ENCODE measurements at regions of chr2 and their contacts with region 1.

Region 1: GRCh38 chr2:109128048-109128465 is 948 bp upstream of the SH3RF3 start:
- DNase-seq: peak; percentile 49 to 79
- H3K4me3 ChIP-seq: peak overlapping the region; percentile 70
- H3K27ac ChIP-seq: no peak overlapping the region
- H3K4me1 ChIP-seq: peaks cover 57% of the 10 kb centered on the region
- H3K27me3 ChIP-seq: no peaks in the 10 kb centered on the region
- CTCF ChIP-seq: peak; percentile 90

Region 2: DNA sequence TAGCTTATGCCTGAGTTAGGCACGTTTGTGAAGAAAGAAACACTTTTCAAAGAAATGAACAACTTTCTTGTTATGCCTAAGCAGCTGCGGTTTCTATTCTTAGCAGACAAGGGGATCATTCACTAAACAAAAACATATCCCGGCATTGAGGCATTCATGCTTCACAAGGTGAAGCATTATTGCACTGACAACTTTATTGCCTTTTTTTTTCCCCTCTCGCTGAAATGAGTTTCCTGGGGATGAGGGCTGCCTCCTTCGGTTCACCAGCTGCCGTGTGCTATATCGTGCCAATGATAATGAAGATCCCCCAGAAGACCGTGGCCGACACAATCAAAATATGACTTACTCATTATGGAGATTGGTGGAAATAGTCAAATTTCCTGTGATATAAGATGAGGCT is 1953.9 kb before region 1 on chr2:
- CTCF ChIA-PET with region 1: no interaction called
- POLR2A ChIA-PET with region 1: no interaction called
- intact Hi-C with region 1: no loop called
- DNase-seq: no peak
- H3K4me3 ChIP-seq: no peak overlapping the region
- H3K27ac ChIP-seq: no peak overlapping the region
- H3K4me1 ChIP-seq: no peaks in the 10 kb centered on the region
- H3K27me3 ChIP-seq: peaks cover 19% of the 10 kb centered on the region
- CTCF ChIP-seq: no peak

Region 3: DNA sequence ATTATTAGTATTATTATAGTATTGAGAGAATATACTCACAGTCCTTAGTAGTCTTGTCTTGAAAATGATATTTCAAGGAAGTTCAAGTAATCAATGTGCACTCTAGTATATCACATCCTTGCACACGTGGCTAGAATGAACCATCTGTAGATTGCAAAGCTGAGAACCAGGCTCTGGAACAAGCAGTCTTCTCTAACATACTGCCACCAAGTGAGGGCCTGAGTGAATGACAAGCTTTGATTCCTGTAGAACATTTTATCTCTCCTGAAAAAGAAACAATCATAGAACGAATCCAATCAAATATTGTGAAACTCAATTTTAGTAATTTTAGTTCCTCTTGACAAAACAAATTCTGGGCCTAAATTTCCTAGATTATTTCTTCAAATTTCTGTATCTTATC is 943.6 kb before region 1 on chr2:
- CTCF ChIA-PET with region 1: no interaction called
- POLR2A ChIA-PET with region 1: no interaction called
- intact Hi-C with region 1: no loop called
- DNase-seq: no peak
- H3K4me3 ChIP-seq: no peak overlapping the region
- H3K27ac ChIP-seq: no peak overlapping the region
- H3K4me1 ChIP-seq: no peaks in the 10 kb centered on the region
- H3K27me3 ChIP-seq: peaks cover 4% of the 10 kb centered on the region; the same call in 1 of the 2 replicates
- CTCF ChIP-seq: peak; percentile 56

Region 4: GRCh38 chr2:108927936-108928659 is 200.0 kb before region 1 on chr2:
- CTCF ChIA-PET with region 1: no interaction called
- POLR2A ChIA-PET with region 1: no interaction called
- intact Hi-C with region 1: loop called (anchors 1 kb)
- DNase-seq: peak; percentile 20 to 50
- H3K4me3 ChIP-seq: no peak overlapping the region
- H3K27ac ChIP-seq: no peak overlapping the region
- H3K4me1 ChIP-seq: peaks cover 7% of the 10 kb centered on the region
- H3K27me3 ChIP-seq: 0 out of 2 replicates have a peak, but pooled peaks cover 3% of the 10 kb centered on the region
- CTCF ChIP-seq: peak; percentile 92

Region 5: DNA sequence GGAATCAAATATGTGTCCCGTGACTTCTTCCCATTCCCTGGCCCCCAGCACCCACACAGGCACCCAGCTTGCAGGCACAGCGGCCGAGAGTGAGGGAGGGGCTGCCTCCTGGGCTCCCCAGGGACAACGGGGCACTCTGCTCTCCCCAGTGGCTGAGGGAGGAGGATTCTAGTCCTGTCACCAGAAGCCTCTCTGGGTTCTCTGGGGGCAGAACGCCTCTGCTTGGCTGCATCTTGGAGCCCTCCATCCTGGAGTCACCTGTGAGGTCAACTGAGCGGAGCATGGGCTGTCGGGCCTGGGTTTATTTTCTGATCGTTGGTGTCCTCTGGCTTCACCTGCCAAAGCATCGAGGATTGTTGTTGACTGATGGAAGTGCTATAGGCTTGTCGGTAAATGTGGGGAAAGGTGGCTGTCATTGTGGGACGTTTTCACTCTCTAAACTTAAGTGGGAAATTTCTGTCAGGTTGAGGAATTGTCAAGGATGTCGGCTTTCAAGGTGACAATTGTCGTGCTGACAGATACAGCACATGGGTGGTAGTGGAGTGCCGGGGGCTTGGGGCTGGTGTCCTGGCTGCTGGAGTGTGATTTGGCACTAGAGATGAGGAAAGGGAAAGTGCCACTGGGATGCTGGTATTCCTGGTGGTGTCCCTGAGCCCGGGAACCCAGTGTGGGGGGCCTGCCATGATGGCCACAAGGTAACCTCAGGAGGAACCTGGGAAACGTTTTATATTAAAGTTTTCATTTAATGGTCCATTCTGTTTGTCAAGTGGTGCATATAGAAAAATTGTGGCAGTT is 14.6 kb after region 1 on chr2:
- CTCF ChIA-PET with region 1: interaction called, 11 read pairs
- POLR2A ChIA-PET with region 1: no interaction called
- intact Hi-C with region 1: no loop called
- DNase-seq: no peak
- H3K4me3 ChIP-seq: no peak overlapping the region
- H3K27ac ChIP-seq: no peak overlapping the region
- H3K4me1 ChIP-seq: no peaks in the 10 kb centered on the region
- H3K27me3 ChIP-seq: no peaks in the 10 kb centered on the region
- CTCF ChIP-seq: no peak

Region 6: GRCh38 chr2:109173311-109174171 is 45.5 kb after region 1 on chr2:
- CTCF ChIA-PET with region 1: no interaction called
- POLR2A ChIA-PET with region 1: no interaction called
- intact Hi-C with region 1: no loop called
- DNase-seq: no peak
- H3K4me3 ChIP-seq: no peak overlapping the region
- H3K27ac ChIP-seq: no peak overlapping the region
- H3K4me1 ChIP-seq: peaks cover 11% of the 10 kb centered on the region; the same call in 1 of the 2 replicates
- H3K27me3 ChIP-seq: no peaks in the 10 kb centered on the region
- CTCF ChIP-seq: no peak

Region 7: GRCh38 chr2:109238580-109238979 is 110.5 kb after region 1 on chr2:
- CTCF ChIA-PET with region 1: no interaction called
- POLR2A ChIA-PET with region 1: no interaction called
- intact Hi-C with region 1: loop called (anchors 2 kb)
- DNase-seq: peak in 1 of 2 experiments; percentile 83
- H3K4me3 ChIP-seq: peak overlapping the region; percentile 37; the same call in 1 of the 2 replicates
- H3K27ac ChIP-seq: peak overlapping the region; percentile 88
- H3K4me1 ChIP-seq: peaks cover 74% of the 10 kb centered on the region
- H3K27me3 ChIP-seq: no peaks in the 10 kb centered on the region
- CTCF ChIP-seq: no peak

Region 8: DNA sequence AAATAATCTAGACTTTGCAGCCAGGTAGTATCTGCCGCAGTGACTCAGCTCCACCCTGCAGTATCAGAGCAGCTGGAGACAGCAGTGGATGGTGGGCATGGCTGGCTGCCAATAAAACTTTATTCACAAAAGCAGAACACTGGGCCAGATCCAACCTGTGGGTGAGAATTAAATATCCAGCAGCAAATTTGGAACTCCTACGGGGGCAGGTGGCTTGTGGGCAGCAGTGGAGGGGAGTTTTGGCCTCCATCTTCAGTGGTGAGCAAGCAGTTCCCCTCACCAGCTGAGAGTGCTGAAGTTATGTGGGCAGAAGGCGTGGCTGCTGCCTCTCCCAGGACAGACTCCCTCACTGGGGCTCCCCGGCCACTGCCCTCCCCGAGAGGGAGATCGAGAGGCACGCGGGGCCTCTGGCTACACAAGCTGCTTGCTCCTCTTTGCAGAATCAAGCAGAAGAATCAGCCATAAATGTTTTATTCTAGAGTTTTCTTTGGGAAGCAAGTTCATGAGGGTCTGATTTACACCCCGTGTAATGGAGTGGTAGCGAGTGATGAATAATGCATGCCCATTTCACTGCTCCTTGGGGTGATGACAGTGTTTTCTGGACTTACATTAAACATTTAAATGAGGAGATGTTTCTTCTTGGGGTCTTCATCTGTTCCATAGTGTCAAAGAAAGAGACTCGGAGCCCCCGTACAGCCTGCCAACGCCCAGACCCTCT is 281.4 kb after region 1 on chr2:
- CTCF ChIA-PET with region 1: no interaction called
- POLR2A ChIA-PET with region 1: no interaction called
- intact Hi-C with region 1: loop called (anchors 2 kb)
- DNase-seq: peak in 1 of 2 experiments; percentile 8
- H3K4me3 ChIP-seq: no peak overlapping the region
- H3K27ac ChIP-seq: no peak overlapping the region
- H3K4me1 ChIP-seq: peaks cover 21% of the 10 kb centered on the region
- H3K27me3 ChIP-seq: no peaks in the 10 kb centered on the region
- CTCF ChIP-seq: no peak

Region 9: GRCh38 chr2:109604597-109604996 is 476.5 kb after region 1 on chr2:
- CTCF ChIA-PET with region 1: no interaction called
- POLR2A ChIA-PET with region 1: no interaction called
- intact Hi-C with region 1: loop called (anchors 10 kb)
- DNase-seq: peak; percentile 75 to 77
- H3K4me3 ChIP-seq: no peak overlapping the region
- H3K27ac ChIP-seq: peak overlapping the region; percentile 68
- H3K4me1 ChIP-seq: peaks cover 53% of the 10 kb centered on the region
- H3K27me3 ChIP-seq: no peaks in the 10 kb centered on the region
- CTCF ChIP-seq: no peak

Region 10: GRCh38 chr2:109736177-109736827 is 608.2 kb after region 1 on chr2:
- CTCF ChIA-PET with region 1: no interaction called
- POLR2A ChIA-PET with region 1: no interaction called
- intact Hi-C with region 1: loop called (anchors 5 kb)
- DNase-seq: peak; percentile 38 to 55
- H3K4me3 ChIP-seq: no peak overlapping the region
- H3K27ac ChIP-seq: no peak overlapping the region
- H3K4me1 ChIP-seq: no peaks in the 10 kb centered on the region
- H3K27me3 ChIP-seq: no peaks in the 10 kb centered on the region
- CTCF ChIP-seq: peak; percentile 82